ENCODE measurements at regions of chr3 and their contacts with region 1.

Region 1: DNA sequence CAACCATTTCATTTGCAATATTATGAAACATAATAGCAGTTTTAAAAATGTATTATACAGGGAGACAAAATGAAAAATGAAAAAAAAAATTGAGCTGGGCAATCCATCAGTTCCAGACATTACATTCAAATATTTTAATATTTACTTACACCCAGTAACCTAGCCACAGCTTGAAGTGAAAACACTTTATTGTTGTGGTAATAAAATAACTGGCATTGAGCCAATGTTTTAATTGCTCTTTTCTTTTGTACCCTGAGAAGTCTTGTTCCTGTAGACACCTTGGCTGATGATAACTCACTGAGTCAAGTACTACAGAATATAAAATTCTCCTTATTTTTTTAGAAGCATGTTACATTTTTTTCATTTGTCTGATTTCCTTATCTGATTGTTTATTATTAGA is 180.6 kb downstream of the ROBO1 start:
- DNase-seq: no peak
- ATAC-seq: no peak
- H3K4me3 ChIP-seq: no peak overlapping the region
- H3K27ac ChIP-seq: no peak overlapping the region
- H3K4me1 ChIP-seq: no peaks in the 10 kb centered on the region
- H3K27me3 ChIP-seq: no peaks in the 10 kb centered on the region
- CTCF ChIP-seq: no peak
- POLR2A ChIP-seq: no peak
- RAD21 ChIP-seq: no peak

Region 2: GRCh38 chr3:79651536-79652065 is 64.5 kb after region 1 on chr3:
- CTCF ChIA-PET with region 1: no interaction called
- POLR2A ChIA-PET with region 1: no interaction called
- dilution Hi-C with region 1: no loop called
- in situ Hi-C with region 1: no loop called
- intact Hi-C with region 1: loop called (anchors 10 kb)
- DNase-seq: no peak
- ATAC-seq: no peak
- H3K4me3 ChIP-seq: no peak overlapping the region
- H3K27ac ChIP-seq: no peak overlapping the region
- H3K4me1 ChIP-seq: no peaks in the 10 kb centered on the region
- H3K27me3 ChIP-seq: no peaks in the 10 kb centered on the region
- CTCF ChIP-seq: no peak
- POLR2A ChIP-seq: no peak
- RAD21 ChIP-seq: no peak

Measured in IMR-90 (cell line).